PC-3 (cell line): ENCODE measurements at regions of chr14 and their contacts with region 1.

Region 1: DNA sequence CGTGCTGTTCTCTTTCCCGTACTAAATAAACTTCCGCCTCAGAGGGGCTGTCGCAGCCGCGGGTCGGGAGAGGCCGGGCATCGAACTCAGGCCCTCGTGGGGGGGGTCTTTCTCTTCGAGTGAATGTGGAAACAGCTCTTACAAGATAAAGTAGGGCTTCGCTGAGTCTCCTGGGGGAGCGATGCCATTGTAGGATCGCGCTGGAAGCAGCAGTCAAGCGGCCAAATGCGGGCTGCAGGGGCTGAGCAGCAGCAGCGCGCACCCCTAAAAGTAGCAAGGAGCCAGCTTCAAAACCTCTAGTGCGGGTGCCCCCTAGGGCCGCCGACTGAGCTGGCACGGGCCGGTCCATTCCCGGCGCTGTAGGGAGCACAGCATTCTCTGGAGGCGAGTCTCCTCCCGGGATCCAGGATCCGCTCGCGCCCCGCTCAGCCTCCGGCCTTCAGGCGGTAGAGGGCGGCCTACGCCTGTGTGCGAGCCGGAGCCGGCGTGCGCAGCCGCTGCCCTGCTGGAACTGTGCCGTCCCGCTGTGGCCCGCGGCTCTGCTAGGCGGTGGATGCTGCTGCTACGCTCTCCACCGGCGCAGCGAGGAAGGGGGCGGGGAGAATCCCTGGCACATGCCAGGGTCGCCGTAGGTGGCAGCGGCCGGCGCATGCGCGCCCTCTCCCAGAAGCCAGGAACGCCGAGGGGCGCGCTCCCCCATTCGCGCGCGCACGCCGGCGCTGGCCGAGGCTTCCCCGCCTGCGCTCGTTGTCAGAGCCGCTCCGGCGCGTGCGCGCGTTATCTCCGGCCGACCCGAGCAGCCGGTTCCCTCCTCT is at the start of gene FUT8:
- DNase-seq: peak; percentile 98
- ATAC-seq: peak; percentile 82
- H3K4me3 ChIP-seq: peak within 1 kb of the TSS; percentile 86
- H3K27ac ChIP-seq: peak within 1 kb of the TSS; percentile 86
- H3K4me1 ChIP-seq: peaks cover 25% of the 10 kb centered on the region
- H3K27me3 ChIP-seq: no peaks in the 10 kb centered on the region
- CTCF ChIP-seq: peak; percentile 72
- total RNA-seq, gene FUT8: 129 and 132 TPM in 2 replicates

Region 2: GRCh38 chr14:65222440-65222858 is 189.8 kb before region 1 on chr14:
- CTCF ChIA-PET with region 1: interaction called, 3 read pairs
- POLR2A ChIA-PET with region 1: no interaction called
- intact Hi-C with region 1: loop called (anchors 1 kb)
- DNase-seq: peak; percentile 78
- ATAC-seq: peak; percentile 44
- H3K4me3 ChIP-seq: no peak overlapping the region
- H3K27ac ChIP-seq: peak overlapping the region; percentile 22
- H3K4me1 ChIP-seq: peaks cover 41% of the 10 kb centered on the region
- H3K27me3 ChIP-seq: no peaks in the 10 kb centered on the region
- CTCF ChIP-seq: peak; percentile 97

Region 3: DNA sequence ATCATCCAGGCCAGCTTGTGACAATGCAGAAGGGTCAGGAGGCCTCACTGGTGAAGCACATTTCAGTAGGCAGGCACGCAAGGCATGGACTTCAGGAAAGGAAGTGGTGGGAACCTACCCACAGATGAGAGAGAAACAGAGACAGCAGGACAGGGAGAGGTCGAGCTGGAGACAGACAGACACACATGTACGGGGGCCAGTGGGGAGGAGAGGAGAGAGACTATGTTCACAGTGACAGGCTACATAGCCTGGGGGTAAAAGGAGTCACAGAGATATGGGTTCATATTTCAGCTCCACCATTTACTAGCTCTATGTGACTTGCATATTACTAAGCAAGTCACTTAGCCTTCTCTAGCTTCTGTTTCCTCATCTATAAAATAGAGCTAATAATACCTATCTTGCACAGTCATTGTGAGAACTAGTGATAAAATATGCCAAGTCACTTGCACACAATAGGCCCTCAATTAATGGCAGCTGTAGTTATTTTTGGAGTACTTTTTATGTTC is 90.8 kb before region 1 on chr14:
- CTCF ChIA-PET with region 1: interaction called, 3 read pairs
- POLR2A ChIA-PET with region 1: interaction called, 11 read pairs
- intact Hi-C with region 1: no loop called
- DNase-seq: peak; percentile 98
- ATAC-seq: peak; percentile 92
- H3K4me3 ChIP-seq: no peak overlapping the region
- H3K27ac ChIP-seq: peak overlapping the region; percentile 99
- H3K4me1 ChIP-seq: peaks cover 45% of the 10 kb centered on the region
- H3K27me3 ChIP-seq: no peaks in the 10 kb centered on the region
- CTCF ChIP-seq: no peak

Region 4: DNA sequence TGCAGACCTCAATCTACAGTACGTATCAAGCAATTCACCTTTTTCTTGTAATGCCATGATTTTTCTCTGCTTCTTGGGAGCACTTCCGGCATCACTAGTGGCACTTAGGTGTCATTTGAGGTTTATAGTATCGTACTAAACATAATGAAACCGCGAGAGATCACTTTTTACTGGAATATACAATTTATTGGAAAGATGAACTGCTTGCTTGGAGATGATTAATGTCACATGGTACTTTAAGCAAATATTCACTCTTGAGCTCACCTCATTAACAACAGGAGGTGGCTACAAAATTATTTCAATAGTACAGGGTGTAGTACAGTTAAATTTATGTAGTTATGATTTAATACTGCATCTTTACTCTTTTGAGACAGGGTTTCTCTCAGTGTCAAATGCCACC is 11.7 kb after region 1 on chr14:
- CTCF ChIA-PET with region 1: interaction called, 8 read pairs
- POLR2A ChIA-PET with region 1: interaction called, 4 read pairs
- intact Hi-C with region 1: loop called (anchors 1 kb)
- DNase-seq: peak; percentile 65
- ATAC-seq: peak; percentile 76
- H3K4me3 ChIP-seq: peak overlapping the region; percentile 44
- H3K27ac ChIP-seq: peak overlapping the region; percentile 63
- H3K4me1 ChIP-seq: peaks cover 44% of the 10 kb centered on the region
- H3K27me3 ChIP-seq: no peaks in the 10 kb centered on the region
- CTCF ChIP-seq: no peak

Region 5: GRCh38 chr14:65731933-65732510 is 319.8 kb after region 1 on chr14:
- CTCF ChIA-PET with region 1: no interaction called
- POLR2A ChIA-PET with region 1: no interaction called
- intact Hi-C with region 1: loop called (anchors 10 kb)
- DNase-seq: peak; percentile 7
- ATAC-seq: peak; percentile 83
- H3K4me3 ChIP-seq: no peak overlapping the region
- H3K27ac ChIP-seq: no peak overlapping the region
- H3K4me1 ChIP-seq: no peaks in the 10 kb centered on the region
- H3K27me3 ChIP-seq: no peaks in the 10 kb centered on the region
- CTCF ChIP-seq: no peak

Region 6: GRCh38 chr14:65958664-65959562 is 546.7 kb after region 1 on chr14:
- CTCF ChIA-PET with region 1: interaction called, 4 read pairs
- POLR2A ChIA-PET with region 1: no interaction called
- intact Hi-C with region 1: loop called (anchors 1 kb)
- DNase-seq: peak; percentile 55
- ATAC-seq: peak; percentile 75
- H3K4me3 ChIP-seq: no peak overlapping the region
- H3K27ac ChIP-seq: no peak overlapping the region
- H3K4me1 ChIP-seq: no peaks in the 10 kb centered on the region
- H3K27me3 ChIP-seq: peaks cover 36% of the 10 kb centered on the region
- CTCF ChIP-seq: peak; percentile 75